ENCODE measurements at regions of chr3 and their contacts with region 1.

Region 1: GRCh38 chr3:149575961-149576564 is 81.8 kb downstream of the WWTR1 start:
- DNase-seq: peak; percentile 87
- H3K4me3 ChIP-seq: peak overlapping the region; percentile 31
- CTCF ChIP-seq: no peak

Region 2: DNA sequence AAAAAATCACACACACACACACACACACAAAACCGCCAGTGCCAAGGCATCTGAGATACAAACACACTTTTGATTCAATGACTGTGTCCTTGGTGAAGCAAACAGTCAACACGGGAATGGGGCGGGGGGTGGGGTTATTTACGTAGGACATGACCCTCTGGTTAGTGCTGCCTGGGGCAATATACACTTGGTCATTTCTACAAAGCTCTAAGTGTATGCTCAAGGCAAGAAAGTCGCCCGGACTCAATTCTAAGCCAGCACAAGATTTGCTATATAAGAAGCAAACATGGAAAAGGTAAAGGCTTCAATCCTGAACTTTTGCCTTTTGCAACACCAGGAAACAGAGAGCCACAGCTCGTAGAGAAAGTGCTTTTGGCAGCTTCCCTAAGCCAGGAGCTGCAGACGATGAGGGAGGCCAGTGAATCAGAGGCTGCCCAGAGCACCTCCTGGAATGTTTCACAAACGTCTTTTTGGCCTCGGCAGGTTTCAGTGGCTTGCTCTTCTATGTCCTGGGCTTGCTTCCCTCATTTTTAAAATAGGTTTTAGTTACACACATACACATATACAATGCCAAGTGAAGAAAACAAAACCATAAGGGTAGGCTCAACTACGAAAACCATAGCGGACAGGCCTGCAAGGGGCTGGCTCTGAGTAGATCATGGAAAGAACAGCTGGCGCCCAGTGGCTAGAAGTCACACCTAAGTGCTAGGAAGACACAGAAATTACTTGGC is 28.0 kb before region 1 on chr3:
- CTCF ChIA-PET with region 1: interaction called, 17 read pairs
- POLR2A ChIA-PET with region 1: no interaction called
- DNase-seq: peak; percentile 46
- H3K4me3 ChIP-seq: no peak overlapping the region
- CTCF ChIP-seq: no peak

Region 3: GRCh38 chr3:149559525-149559924 is 16.5 kb before region 1 on chr3:
- CTCF ChIA-PET with region 1: interaction called, 34 read pairs
- POLR2A ChIA-PET with region 1: interaction called, 9 read pairs
- DNase-seq: no peak
- H3K4me3 ChIP-seq: no peak overlapping the region
- CTCF ChIP-seq: no peak

Region 4: GRCh38 chr3:149586871-149587270 is 10.8 kb after region 1 on chr3:
- CTCF ChIA-PET with region 1: interaction called, 15 read pairs
- POLR2A ChIA-PET with region 1: interaction called, 4 read pairs
- DNase-seq: no peak
- H3K4me3 ChIP-seq: no peak overlapping the region
- CTCF ChIP-seq: no peak

Region 5: GRCh38 chr3:149612456-149612855 is 36.4 kb after region 1 on chr3:
- CTCF ChIA-PET with region 1: no interaction called
- POLR2A ChIA-PET with region 1: no interaction called
- DNase-seq: no peak
- H3K4me3 ChIP-seq: no peak overlapping the region
- CTCF ChIP-seq: no peak

Region 6: GRCh38 chr3:149657926-149658733 is 82.1 kb after region 1 on chr3 and contains the start of gene WWTR1:
- CTCF ChIA-PET with region 1: interaction called, 5 read pairs
- POLR2A ChIA-PET with region 1: interaction called, 26 read pairs
- DNase-seq: peak; percentile 79
- H3K4me3 ChIP-seq: peak within 1 kb of the TSS; percentile 93
- CTCF ChIP-seq: peak; percentile 22

Region 7: GRCh38 chr3:149702691-149703441 is 126.8 kb after region 1 on chr3:
- CTCF ChIA-PET with region 1: interaction called, 13 read pairs
- POLR2A ChIA-PET with region 1: no interaction called
- DNase-seq: peak; percentile 82
- H3K4me3 ChIP-seq: no peak overlapping the region
- CTCF ChIP-seq: no peak

Region 8: DNA sequence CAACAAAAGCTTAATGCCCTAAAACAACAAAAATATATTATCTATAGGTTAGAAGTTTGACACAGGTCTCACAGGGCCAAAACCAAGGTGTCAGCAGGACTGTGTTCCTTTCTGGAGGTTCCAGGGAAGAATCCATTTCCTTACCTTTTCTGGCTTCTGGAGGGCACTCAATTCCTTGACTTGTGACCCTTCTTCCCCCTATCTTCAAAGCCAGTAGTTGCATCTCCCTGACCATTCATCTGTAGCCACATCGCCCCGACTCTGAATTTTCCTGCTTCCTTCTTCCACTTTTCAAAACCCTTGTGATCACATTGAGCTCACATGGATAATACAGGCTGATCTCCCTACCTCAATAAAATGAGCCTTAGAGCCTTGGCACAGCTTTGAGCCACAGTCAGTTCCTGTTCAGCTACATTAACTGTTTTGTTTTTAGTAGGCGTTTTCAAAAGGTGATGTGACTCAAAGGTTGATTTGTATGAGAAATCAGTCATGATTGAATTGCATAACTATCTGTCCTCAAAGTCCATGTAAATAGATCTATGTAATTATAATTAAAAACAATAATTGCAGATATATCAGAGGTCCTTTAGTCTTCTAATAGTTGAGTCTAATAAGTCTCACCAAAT is 382.2 kb after region 1 on chr3:
- CTCF ChIA-PET with region 1: no interaction called
- POLR2A ChIA-PET with region 1: no interaction called
- DNase-seq: no peak
- H3K4me3 ChIP-seq: no peak overlapping the region
- CTCF ChIP-seq: no peak

Measured in AG04449 (cell line).